HAP-1 (cell line): ENCODE measurements at regions of chrX and their contacts with region 1.

Region 1: DNA sequence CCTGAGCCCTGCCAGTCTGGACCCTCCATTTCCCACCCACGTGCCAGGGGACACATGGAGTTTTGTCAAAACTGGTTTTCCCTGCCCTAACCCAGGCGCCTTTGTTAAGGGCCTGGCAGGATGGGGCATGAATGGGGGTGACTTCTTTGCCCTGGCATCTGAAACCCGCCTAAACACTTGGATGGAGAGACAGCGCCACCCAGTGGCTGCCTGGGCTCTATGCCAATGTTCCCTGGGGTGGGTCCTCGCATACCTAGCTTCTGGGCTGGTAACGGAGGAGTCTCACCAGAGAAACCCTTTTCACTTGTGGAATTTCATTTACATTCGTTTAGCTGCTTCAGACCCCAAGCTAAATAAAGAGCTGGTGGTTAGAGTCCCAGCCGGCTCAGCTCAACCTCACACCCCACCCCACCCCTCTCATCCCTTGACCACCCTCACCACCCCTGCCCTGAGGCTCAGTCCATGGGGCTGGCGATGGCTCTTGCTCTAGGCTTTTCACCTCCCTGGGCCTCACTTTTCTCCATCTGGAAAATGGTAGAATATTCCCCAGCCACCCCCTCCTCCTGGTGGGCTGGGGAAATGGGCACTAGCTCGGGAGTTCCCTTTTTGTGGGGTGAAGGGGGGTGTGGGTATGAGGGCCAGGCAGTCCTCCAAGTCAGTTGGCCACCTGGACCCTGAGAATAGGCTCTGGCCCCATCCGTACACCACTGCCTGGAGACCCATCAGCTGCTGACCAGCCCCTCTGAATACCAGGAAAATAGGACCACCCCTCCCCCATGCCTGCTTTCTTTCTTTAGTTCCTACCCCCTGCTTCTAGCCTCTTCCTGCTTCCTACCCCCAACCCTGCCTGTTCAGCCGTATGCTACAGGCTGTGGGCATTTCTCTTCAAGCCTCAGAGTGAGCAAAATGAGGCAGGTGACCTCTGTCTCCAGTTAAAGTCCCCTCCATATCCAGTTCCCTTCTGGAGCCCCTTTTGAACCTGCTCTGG is 57.1 kb upstream of the PJA1 start:
- DNase-seq: peak; percentile 96 to 97
- H3K4me3 ChIP-seq: peak overlapping the region; percentile 37
- H3K4me1 ChIP-seq: peaks cover 24% of the 10 kb centered on the region
- H3K27me3 ChIP-seq: no peaks in the 10 kb centered on the region

Region 2: GRCh38 chrX:68999356-68999755 is 223.0 kb before region 1 on chrX:
- in situ Hi-C with region 1: no loop called
- DNase-seq: peak in 1 of 2 experiments; percentile 5
- H3K4me3 ChIP-seq: no peak overlapping the region
- H3K4me1 ChIP-seq: peaks cover 5% of the 10 kb centered on the region
- H3K27me3 ChIP-seq: peaks cover 4% of the 10 kb centered on the region

Region 3: GRCh38 chrX:69387567-69388487 is 165.4 kb after region 1 on chrX:
- in situ Hi-C with region 1: loop called (anchors 10 kb)
- DNase-seq: peak; percentile 75 to 92
- H3K4me3 ChIP-seq: no peak overlapping the region
- H3K4me1 ChIP-seq: peaks cover 6% of the 10 kb centered on the region
- H3K27me3 ChIP-seq: no peaks in the 10 kb centered on the region

Region 4: DNA sequence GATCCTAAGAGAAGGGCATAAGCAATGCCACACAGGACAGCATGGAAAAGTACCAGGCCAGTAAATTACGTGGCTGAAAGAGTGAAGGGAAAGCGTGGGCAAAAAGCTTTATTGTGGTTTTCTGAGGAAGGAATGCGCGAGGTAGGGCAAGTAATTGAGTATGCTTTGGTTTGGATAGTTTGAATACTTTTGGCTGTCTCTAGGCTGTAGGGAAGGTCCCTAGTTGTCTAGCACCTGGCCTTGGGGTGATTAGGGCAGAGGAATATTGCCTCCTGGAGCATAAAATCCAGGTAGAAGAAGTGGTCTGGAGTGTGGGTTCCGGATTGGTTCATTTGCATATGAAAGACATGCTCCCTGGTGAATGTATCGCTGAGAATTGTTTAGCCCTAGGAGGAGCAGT is 235.4 kb after region 1 on chrX:
- in situ Hi-C with region 1: no loop called
- DNase-seq: no peak
- H3K4me3 ChIP-seq: no peak overlapping the region
- H3K4me1 ChIP-seq: no peaks in the 10 kb centered on the region
- H3K27me3 ChIP-seq: peaks cover 9% of the 10 kb centered on the region